ENCODE measurements at regions of chr1 and their contacts with region 1.

Region 1: GRCh38 chr1:95984798-95985374 is 736.7 kb upstream of the PTBP2 start:
- DNase-seq: no peak
- H3K4me3 Mint-ChIP-seq: no peak overlapping the region
- H3K27ac Mint-ChIP-seq: no peak overlapping the region
- H3K4me1 Mint-ChIP-seq: peaks cover 17% of the 10 kb centered on the region
- H3K27me3 Mint-ChIP-seq: no peaks in the 10 kb centered on the region
- CTCF ChIP-seq: no peak

Region 2: DNA sequence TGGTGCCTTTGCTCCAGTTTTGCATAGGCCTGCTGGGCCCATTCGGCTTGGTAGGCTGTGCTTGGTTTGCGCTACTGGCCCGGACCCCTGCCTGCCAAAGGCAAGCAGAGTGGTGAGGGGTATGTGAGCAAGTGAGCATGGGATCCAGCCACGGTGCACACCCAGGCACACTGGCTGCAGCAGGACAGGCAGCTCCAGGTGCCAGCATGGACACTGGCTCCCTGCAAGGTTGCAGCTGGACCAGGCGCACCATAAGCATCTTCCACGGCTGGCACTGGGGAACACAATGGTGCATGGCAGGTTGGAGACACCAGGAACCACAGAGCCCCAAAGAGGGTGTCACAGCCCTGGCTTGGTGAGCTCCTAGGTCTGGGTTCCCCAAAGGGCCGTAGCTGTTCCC is 43.2 kb after region 1 on chr1:
- CTCF ChIA-PET with region 1: no interaction called
- intact Hi-C with region 1: no loop called
- DNase-seq: no peak
- H3K4me3 Mint-ChIP-seq: no peak overlapping the region
- H3K27ac Mint-ChIP-seq: no peak overlapping the region
- H3K4me1 Mint-ChIP-seq: no peaks in the 10 kb centered on the region
- H3K27me3 Mint-ChIP-seq: no peaks in the 10 kb centered on the region
- CTCF ChIP-seq: no peak

Region 3: GRCh38 chr1:96072763-96073449 is 88.0 kb after region 1 on chr1:
- CTCF ChIA-PET with region 1: no interaction called
- intact Hi-C with region 1: loop called (anchors 5 kb)
- DNase-seq: no peak
- H3K4me3 Mint-ChIP-seq: no peak overlapping the region
- H3K27ac Mint-ChIP-seq: no peak overlapping the region
- H3K4me1 Mint-ChIP-seq: peaks cover 32% of the 10 kb centered on the region
- H3K27me3 Mint-ChIP-seq: no peaks in the 10 kb centered on the region
- CTCF ChIP-seq: no peak

Measured in Calu3 (cell line).